MCF 10A (cell line): ENCODE measurements at regions of chr1 and their contacts with region 1.

Region 1: GRCh38 chr1:227058321-227058751 is 118.2 kb downstream of the COQ8A start:
- DNase-seq: peak; percentile 72
- H3K4me3 Mint-ChIP-seq: no peak overlapping the region
- H3K27ac Mint-ChIP-seq: peak overlapping the region; percentile 94
- H3K4me1 Mint-ChIP-seq: peaks cover 15% of the 10 kb centered on the region
- H3K27me3 Mint-ChIP-seq: no peaks in the 10 kb centered on the region
- CTCF ChIP-seq: no peak

Region 2: DNA sequence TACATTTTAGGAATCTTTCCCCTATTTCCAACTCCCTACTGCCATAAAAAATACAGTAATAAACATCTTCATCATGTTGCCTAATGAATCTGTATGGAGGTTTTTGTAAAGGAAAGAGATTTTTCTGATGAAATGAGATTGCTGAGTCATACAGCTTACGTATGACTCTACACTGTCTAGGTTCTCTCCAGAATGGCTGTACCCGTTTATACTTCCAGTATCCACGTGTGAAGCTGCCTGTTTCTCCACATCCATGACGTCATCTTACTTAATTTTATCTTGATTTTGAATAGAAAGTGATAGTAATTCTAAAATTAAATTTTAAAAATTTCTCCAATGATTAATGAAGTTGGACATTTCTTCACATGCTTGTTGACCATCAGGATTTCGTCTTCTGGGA is 14.6 kb before region 1 on chr1:
- CTCF ChIA-PET with region 1: interaction called, 3 read pairs
- POLR2A ChIA-PET with region 1: interaction called, 15 read pairs
- intact Hi-C with region 1: no loop called
- DNase-seq: peak; percentile 75
- H3K4me3 Mint-ChIP-seq: no peak overlapping the region
- H3K27ac Mint-ChIP-seq: no peak overlapping the region
- H3K4me1 Mint-ChIP-seq: peaks cover 8% of the 10 kb centered on the region
- H3K27me3 Mint-ChIP-seq: no peaks in the 10 kb centered on the region
- CTCF ChIP-seq: no peak

Region 3: GRCh38 chr1:227072991-227073390 is 14.7 kb after region 1 on chr1:
- CTCF ChIA-PET with region 1: interaction called, 4 read pairs
- POLR2A ChIA-PET with region 1: interaction called, 21 read pairs
- intact Hi-C with region 1: no loop called
- DNase-seq: peak; percentile 60
- H3K4me3 Mint-ChIP-seq: no peak overlapping the region
- H3K27ac Mint-ChIP-seq: peak overlapping the region; percentile 67
- H3K4me1 Mint-ChIP-seq: peaks cover 10% of the 10 kb centered on the region
- H3K27me3 Mint-ChIP-seq: no peaks in the 10 kb centered on the region
- CTCF ChIP-seq: no peak